ENCODE measurements at regions of chr6 and their contacts with region 1.

Region 1: GRCh38 chr6:166940643-166941068 is 15.7 kb downstream of the RNASET2 start:
- DNase-seq: no peak
- H3K4me3 ChIP-seq: no peak overlapping the region
- H3K4me3 Mint-ChIP-seq: no peak overlapping the region
- H3K27ac ChIP-seq: no peak overlapping the region
- H3K27ac Mint-ChIP-seq: peak overlapping the region in 4 of 7 donors; percentile 32 to 81 (median 39)
- H3K4me1 ChIP-seq: peaks cover 40% of the 10 kb centered on the region
- H3K4me1 Mint-ChIP-seq: peaks cover 30 to 55% (median 38%) of the 10 kb centered on the region in 4 donors
- H3K27me3 ChIP-seq: no peaks in the 10 kb centered on the region
- H3K27me3 Mint-ChIP-seq: no peaks in the 10 kb centered on the region

Region 2: DNA sequence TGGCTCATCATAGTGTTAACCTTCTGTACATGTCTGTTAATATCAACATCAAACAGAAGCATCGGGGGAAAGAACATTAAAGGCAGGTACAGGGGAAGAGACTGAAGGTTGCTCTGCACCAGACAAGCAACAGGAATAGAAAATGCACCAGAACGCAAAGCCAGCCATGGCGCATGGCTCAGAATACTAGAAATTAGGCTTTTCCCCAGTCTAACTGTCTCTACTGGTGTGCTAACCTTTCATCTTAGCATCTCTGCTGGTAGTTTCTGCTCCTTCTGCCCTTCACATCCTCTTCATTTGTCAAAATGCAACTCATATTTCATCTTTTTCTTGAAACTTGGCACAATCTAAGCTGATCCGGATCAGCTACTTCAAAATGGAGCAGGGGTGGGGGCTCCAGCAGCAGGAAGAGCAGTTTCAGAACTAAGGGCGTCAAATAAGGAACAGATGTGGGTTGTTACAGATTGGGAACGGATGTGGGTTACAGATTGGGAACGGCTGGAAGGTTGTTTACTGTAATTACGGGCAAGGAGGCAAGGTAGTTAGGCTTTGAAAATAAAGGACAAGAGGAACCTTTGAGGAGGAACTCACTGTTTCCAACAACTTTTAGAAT is 28.8 kb after region 1 on chr6:
- CTCF ChIA-PET with region 1: interaction called, 3 read pairs
- POLR2A ChIA-PET with region 1: interaction called, 4 read pairs
- intact Hi-C with region 1: loop called (anchors 1 kb)
- DNase-seq: peak in 3 of 5 donors; percentile 19 to 47 (median 42)
- H3K4me3 ChIP-seq: no peak overlapping the region
- H3K4me3 Mint-ChIP-seq: peak overlapping the region; percentile 12 to 75 (median 69)
- H3K27ac ChIP-seq: peak overlapping the region; percentile 7
- H3K27ac Mint-ChIP-seq: peak overlapping the region; percentile 59 to 97 (median 87)
- H3K4me1 ChIP-seq: peaks cover 27% of the 10 kb centered on the region
- H3K4me1 Mint-ChIP-seq: peaks cover 13 to 40% (median 23%) of the 10 kb centered on the region in 4 donors
- H3K27me3 ChIP-seq: no peaks in the 10 kb centered on the region
- H3K27me3 Mint-ChIP-seq: no peaks in the 10 kb centered on the region

Region 3: DNA sequence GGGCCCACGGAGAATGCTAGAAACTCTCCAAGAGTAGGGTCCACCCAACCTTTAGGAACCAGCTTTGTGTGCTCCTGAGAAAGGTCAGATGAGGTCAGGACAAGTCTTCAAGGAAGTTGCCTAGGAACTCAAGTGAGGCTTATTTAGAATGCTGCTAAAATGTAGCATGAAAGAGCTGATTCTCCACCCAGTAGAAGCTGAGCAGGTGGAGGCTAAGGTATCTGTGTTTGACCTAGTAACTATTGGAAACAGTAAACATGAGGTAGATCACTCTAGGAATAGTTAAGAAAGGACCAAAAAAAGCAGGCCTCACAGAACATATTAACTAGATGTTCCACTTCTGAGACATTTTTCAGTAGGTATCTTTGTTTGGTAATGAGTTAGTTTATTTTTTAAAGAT is 72.4 kb after region 1 on chr6:
- CTCF ChIA-PET with region 1: no interaction called
- POLR2A ChIA-PET with region 1: no interaction called
- intact Hi-C with region 1: no loop called
- DNase-seq: peak in 2 of 5 donors; percentile 28 to 30
- H3K4me3 ChIP-seq: no peak overlapping the region
- H3K4me3 Mint-ChIP-seq: no peak overlapping the region
- H3K27ac ChIP-seq: no peak overlapping the region
- H3K27ac Mint-ChIP-seq: peak overlapping the region in 6 of 7 donors; percentile 8 to 93 (median 88)
- H3K4me1 ChIP-seq: peaks cover 9% of the 10 kb centered on the region
- H3K4me1 Mint-ChIP-seq: peaks cover 2 to 12% (median 10%) of the 10 kb centered on the region in 4 donors
- H3K27me3 ChIP-seq: no peaks in the 10 kb centered on the region
- H3K27me3 Mint-ChIP-seq: no peaks in the 10 kb centered on the region

Measured in CD4-positive, alpha-beta memory T cell (primary cell).